Activated naive CD4-positive, alpha-beta T cell treated with anti-CD3 and anti-CD28 coated beads for 36 hours (primary cell): ENCODE measurements at regions of chrX and their contacts with region 1.

Region 1: DNA sequence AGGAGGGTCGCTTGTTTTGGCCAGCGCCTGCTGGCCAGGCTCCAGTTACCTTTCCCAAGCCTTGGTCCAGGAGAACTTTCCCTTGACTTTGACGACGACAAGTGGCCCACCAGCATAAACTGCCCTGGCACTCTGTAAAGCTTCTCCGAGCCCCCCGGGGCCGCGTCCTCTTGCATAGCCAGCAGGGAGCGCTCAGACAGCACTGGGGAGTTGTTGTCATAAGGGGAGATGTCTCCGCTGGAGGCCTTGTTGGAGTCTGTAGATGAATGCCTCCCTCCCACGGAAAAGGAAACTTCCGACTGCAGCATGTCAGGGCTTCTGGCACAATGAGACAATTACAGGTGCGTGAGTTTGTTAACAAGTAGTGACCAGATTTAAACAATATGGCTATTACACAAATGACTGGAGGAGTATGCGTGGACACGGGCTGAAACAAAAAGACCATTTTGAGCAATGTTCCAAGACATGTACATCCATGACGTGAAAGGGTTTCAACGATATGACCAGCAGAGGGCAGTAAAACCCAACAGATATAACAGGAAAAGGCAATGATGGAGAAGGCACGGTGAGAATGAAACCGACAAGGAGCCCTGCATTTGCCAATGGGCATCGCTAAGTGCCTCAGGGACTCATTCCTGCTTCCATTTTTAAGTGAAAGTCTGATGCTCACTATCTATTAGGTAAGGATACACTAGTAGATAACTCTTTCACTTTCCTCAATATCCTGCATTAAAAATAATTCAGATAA is 33.0 kb downstream of the HCCS start:
- DNase-seq: peak; percentile 66
- H3K4me3 Mint-ChIP-seq: no peak overlapping the region
- H3K27ac Mint-ChIP-seq: no peak overlapping the region
- H3K4me1 Mint-ChIP-seq: peaks cover 2% of the 10 kb centered on the region
- H3K27me3 Mint-ChIP-seq: peaks cover 5% of the 10 kb centered on the region

Region 2: DNA sequence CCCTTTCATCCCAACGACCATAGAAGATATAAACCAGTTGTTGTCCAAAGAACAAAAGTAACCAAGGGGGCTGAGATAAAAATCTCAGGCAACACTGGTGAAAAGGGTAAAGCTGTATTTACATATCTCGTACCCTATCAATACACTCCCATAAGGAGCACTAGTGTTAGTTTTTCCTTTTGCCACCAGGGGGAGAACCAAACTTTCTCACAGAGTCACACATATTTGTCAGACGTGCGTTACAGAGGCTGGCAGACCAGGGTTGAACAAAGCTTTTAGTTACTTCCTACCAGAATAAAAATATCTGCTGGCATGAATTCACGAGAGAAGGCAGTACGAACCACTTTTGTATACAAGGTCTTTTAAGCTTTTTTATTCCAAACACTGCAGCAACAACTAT is 237.4 kb after region 1 on chrX:
- CTCF ChIA-PET with region 1: no interaction called
- intact Hi-C with region 1: loop called (anchors 5 kb)
- DNase-seq: peak; percentile 5
- H3K4me3 Mint-ChIP-seq: no peak overlapping the region
- H3K27ac Mint-ChIP-seq: no peak overlapping the region
- H3K4me1 Mint-ChIP-seq: peaks cover 1% of the 10 kb centered on the region
- H3K27me3 Mint-ChIP-seq: peaks cover 2% of the 10 kb centered on the region

Region 3: DNA sequence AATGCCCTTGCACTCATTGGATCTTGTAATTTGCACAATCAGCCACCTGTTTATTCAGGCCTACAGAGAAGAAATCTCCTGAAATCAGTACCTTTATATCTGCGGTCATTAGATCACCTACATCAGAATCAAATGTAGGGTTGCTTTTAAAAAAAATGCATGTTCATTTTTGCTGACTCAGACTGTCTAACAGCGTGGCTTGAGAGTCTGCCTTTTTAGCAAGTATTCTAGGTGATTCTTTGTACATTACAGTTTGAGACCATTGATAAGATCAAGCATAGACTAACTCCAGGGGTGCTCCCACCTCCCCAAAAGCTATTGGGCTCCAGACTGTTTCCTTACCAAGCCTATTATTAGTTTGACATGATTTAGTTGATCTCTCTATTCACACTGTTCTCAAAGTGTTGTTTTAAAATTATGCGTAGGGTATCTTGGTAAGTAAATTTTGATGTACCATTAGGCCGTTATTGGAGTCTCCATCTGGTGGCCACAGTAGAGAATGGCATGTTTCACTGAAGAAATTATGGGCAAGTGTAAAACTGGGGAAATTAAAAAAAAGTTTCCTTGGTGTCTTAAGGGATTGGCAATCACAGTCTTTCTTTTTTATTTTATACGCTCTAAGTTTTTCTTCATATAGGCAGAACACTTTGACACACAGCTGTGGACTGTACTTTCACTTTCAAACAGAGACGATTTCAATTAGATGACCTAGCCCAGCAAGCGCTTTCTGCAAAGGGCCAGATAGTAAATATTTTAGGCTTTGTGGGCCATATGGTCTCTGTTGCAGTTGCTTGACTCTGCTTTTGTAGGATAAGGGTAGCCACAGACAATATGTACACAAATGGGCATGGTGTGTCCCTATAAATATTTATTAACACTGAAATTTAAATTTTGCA is 580.3 kb after region 1 on chrX:
- CTCF ChIA-PET with region 1: no interaction called
- intact Hi-C with region 1: loop called (anchors 1 kb)
- DNase-seq: peak; percentile 19
- H3K4me3 Mint-ChIP-seq: no peak overlapping the region
- H3K27ac Mint-ChIP-seq: no peak overlapping the region
- H3K4me1 Mint-ChIP-seq: no peaks in the 10 kb centered on the region
- H3K27me3 Mint-ChIP-seq: no peaks in the 10 kb centered on the region